ENCODE measurements at regions of chr11 and their contacts with region 1.

Region 1: GRCh38 chr11:75388386-75389275 is 10.7 kb upstream of the RPS3 start:
- DNase-seq: peak; percentile 33
- ATAC-seq: peak; percentile 92
- H3K4me3 Mint-ChIP-seq: no peak overlapping the region
- H3K27ac Mint-ChIP-seq: no peak overlapping the region
- H3K4me1 Mint-ChIP-seq: peaks cover 4% of the 10 kb centered on the region
- H3K27me3 Mint-ChIP-seq: peaks cover 16% of the 10 kb centered on the region
- CTCF ChIP-seq: no peak

Region 2: GRCh38 chr11:74806267-74806666 is 582.4 kb before region 1 on chr11:
- CTCF ChIA-PET with region 1: no interaction called
- POLR2A ChIA-PET with region 1: no interaction called
- intact Hi-C with region 1: no loop called
- DNase-seq: no peak
- ATAC-seq: no peak
- H3K4me3 Mint-ChIP-seq: no peak overlapping the region
- H3K27ac Mint-ChIP-seq: no peak overlapping the region
- H3K4me1 Mint-ChIP-seq: peaks cover 10% of the 10 kb centered on the region
- H3K27me3 Mint-ChIP-seq: no peaks in the 10 kb centered on the region
- CTCF ChIP-seq: no peak

Region 3: GRCh38 chr11:75280227-75280701 is 108.4 kb before region 1 on chr11:
- CTCF ChIA-PET with region 1: interaction called, 177 read pairs
- POLR2A ChIA-PET with region 1: interaction called, 7 read pairs
- intact Hi-C with region 1: loop called (anchors 1 kb)
- DNase-seq: peak; percentile 48
- ATAC-seq: peak; percentile 81
- H3K4me3 Mint-ChIP-seq: no peak overlapping the region
- H3K27ac Mint-ChIP-seq: no peak overlapping the region
- H3K4me1 Mint-ChIP-seq: peaks cover 19% of the 10 kb centered on the region
- H3K27me3 Mint-ChIP-seq: no peaks in the 10 kb centered on the region
- CTCF ChIP-seq: peak; percentile 69

Region 4: DNA sequence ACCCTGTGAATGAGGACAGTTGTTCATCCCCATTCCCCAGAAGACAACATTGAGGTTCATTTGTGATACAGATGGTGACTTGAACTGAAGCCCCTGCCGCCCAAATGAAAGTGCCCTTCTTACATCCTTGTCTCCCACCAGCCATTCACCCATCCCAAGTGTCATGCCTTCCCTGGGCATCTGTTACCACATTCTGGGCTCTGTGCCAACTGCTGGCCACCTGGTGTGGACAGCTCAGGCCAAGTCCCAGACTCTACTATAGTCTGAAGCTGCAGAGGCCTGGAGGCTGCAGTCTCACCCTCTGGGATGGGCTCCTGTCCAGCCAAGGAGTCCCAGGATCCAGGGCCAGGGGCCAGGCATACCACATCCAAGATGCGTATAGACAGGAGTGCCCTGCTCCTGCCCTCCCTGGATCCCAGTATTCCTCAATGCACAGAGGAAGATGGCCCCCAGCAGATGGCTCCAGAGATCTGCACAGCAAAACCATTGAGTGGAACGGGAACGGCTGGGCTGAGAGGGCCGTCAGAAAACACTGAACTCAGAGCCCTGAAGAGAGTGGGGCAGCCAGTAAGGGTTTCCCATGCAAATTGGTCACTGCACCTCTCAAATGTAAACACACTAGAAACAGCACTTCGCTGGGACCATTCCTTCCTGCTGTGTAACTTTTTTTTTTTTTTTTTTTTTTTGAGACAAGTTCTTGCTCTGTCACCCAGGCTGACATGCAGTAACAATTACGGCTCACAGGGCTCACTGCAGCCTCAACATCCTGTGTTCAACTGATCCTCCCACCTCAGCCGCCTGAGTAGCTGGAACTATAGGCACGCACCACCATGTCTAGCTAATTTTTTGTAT is 60.0 kb before region 1 on chr11:
- CTCF ChIA-PET with region 1: interaction called, 7 read pairs
- POLR2A ChIA-PET with region 1: no interaction called
- intact Hi-C with region 1: loop called (anchors 1 kb)
- DNase-seq: no peak
- ATAC-seq: no peak
- H3K4me3 Mint-ChIP-seq: no peak overlapping the region
- H3K27ac Mint-ChIP-seq: no peak overlapping the region
- H3K4me1 Mint-ChIP-seq: peaks cover 6% of the 10 kb centered on the region
- H3K27me3 Mint-ChIP-seq: no peaks in the 10 kb centered on the region
- CTCF ChIP-seq: no peak

Region 5: DNA sequence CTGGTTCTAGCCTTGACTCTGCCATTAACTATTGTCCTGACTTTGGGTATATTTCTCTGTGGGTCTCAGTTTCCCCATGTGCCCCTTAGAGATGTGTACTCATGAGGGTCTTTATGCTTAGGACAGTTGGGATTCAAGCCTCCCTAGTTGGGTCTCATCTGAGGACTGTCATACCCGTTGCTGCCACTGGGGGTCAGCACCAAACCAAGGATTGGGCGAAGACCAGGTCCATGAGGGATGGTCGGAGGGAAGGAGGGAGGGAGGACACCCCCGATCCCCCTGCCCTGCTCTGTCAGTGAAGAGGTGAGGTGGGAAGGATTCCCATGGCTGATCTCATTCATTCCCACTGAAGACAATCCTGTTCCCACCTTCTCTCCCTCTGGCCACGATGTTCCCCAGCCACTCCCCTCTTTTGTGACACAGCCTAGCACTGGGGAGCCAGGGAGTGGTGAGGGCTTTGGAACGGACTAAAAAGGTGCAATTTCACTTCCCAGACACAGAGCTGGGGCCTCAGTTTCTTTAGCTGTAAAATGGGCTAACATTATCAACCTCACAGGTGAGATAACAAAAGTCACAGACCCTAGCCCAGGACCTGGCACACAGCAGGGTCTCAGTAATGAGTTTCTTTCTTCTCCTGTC is 56.8 kb after region 1 on chr11:
- CTCF ChIA-PET with region 1: no interaction called
- POLR2A ChIA-PET with region 1: no interaction called
- intact Hi-C with region 1: loop called (anchors 1 kb)
- DNase-seq: peak; percentile 69
- ATAC-seq: peak; percentile 98
- H3K4me3 Mint-ChIP-seq: no peak overlapping the region
- H3K27ac Mint-ChIP-seq: no peak overlapping the region
- H3K4me1 Mint-ChIP-seq: no peaks in the 10 kb centered on the region
- H3K27me3 Mint-ChIP-seq: no peaks in the 10 kb centered on the region
- CTCF ChIP-seq: no peak

Region 6: DNA sequence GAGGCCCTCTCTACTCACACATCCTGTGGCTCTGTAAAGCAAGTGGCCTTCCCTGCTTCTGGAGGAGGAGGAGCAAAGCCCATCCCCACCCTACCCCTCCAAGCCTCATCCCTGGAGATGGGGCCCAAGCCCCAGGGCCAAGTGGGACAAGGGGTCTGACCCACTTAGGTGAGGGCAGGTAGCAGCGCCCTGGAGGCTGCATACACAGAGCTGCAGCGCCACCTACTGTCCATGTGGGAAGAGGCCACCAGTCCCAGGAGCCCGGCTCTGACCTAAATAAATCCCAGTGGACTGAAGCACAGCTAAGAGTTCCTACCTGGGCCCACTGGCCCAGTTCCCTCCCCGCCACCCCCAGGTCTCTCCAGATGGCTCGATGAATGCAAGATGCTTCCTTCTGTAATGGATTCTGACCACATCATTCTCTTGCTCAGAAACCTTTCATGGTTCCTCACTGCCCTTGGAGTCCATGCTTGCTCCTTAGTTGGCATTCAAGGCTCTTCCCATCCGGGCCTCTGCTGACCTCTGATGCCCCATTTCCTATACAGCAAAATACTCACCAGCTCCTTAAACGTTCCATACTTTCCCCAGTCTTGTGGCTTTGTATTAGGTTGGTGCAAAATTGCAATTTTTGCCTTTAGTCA is 930.2 kb after region 1 on chr11:
- CTCF ChIA-PET with region 1: no interaction called
- POLR2A ChIA-PET with region 1: no interaction called
- intact Hi-C with region 1: loop called (anchors 10 kb)
- DNase-seq: peak; percentile 73
- ATAC-seq: peak; percentile 97
- H3K4me3 Mint-ChIP-seq: no peak overlapping the region
- H3K27ac Mint-ChIP-seq: no peak overlapping the region
- H3K4me1 Mint-ChIP-seq: peaks cover 2% of the 10 kb centered on the region
- H3K27me3 Mint-ChIP-seq: peaks cover 40% of the 10 kb centered on the region
- CTCF ChIP-seq: no peak

Measured in activated B cell treated with CpG ODN at 0.5 μM for 24 hours (primary cell).